A549 (cell line): ENCODE measurements at regions of chr11 and their contacts with region 1.

Region 1: GRCh38 chr11:29328961-29329441 is 687.8 kb downstream of the KCNA4 start:
- DNase-seq: peak; percentile 33 to 84
- ATAC-seq: peak; percentile 85 to 92
- H3K4me3 ChIP-seq: no peak overlapping the region
- H3K27ac ChIP-seq: peak overlapping the region; percentile 52 to 83
- H3K4me1 ChIP-seq: peaks cover 19% of the 10 kb centered on the region
- CTCF ChIP-seq: peak; percentile 86
- EP300 ChIP-seq: no peak; a peak in 1 of 5 replicates
- POLR2A ChIP-seq: no peak
- RAD21 ChIP-seq: peak; percentile 94 to 96

Region 2: DNA sequence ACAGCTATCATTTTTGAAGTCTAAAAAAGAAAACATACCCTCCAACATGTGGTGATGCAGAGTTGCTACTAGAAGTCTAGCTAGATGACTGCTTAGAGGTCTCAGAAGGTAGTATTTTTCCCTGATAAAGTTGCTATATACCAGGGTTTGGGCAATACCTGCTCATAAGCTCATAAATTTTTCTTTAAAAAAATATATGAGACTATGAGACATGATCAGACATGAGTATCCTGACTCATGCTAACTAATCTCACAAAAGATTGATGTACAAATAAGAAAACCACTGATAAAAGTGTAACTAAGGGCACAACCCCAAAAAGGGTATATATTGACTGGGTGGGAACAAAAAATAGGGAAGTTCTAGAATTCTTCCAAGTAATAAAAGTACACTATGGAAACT is 479.9 kb before region 1 on chr11:
- CTCF ChIA-PET with region 1: interaction called, 13 read pairs
- POLR2A ChIA-PET with region 1: no interaction called
- DNase-seq: no peak
- ATAC-seq: no peak
- H3K4me3 ChIP-seq: no peak overlapping the region
- H3K27ac ChIP-seq: peak overlapping the region; percentile 18 to 58; a peak in 3 of 6 replicates
- H3K4me1 ChIP-seq: no peaks in the 10 kb centered on the region
- CTCF ChIP-seq: no peak
- EP300 ChIP-seq: no peak; a peak in 1 of 5 replicates
- POLR2A ChIP-seq: no peak
- RAD21 ChIP-seq: no peak

Region 3: GRCh38 chr11:28874706-28875105 is 454.3 kb before region 1 on chr11:
- CTCF ChIA-PET with region 1: no interaction called
- POLR2A ChIA-PET with region 1: no interaction called
- DNase-seq: no peak
- ATAC-seq: no peak
- H3K4me3 ChIP-seq: no peak overlapping the region
- H3K27ac ChIP-seq: no peak overlapping the region
- H3K4me1 ChIP-seq: peaks cover 13% of the 10 kb centered on the region
- CTCF ChIP-seq: no peak
- EP300 ChIP-seq: no peak
- POLR2A ChIP-seq: no peak
- RAD21 ChIP-seq: no peak

Region 4: GRCh38 chr11:28976801-28977145 is 352.2 kb before region 1 on chr11:
- CTCF ChIA-PET with region 1: no interaction called
- POLR2A ChIA-PET with region 1: no interaction called
- DNase-seq: no peak
- ATAC-seq: no peak
- H3K4me3 ChIP-seq: no peak overlapping the region
- H3K27ac ChIP-seq: no peak overlapping the region
- H3K4me1 ChIP-seq: peaks cover 6% of the 10 kb centered on the region; the same call in 1 of the 3 replicates
- CTCF ChIP-seq: no peak
- EP300 ChIP-seq: no peak
- POLR2A ChIP-seq: no peak
- RAD21 ChIP-seq: no peak

Region 5: DNA sequence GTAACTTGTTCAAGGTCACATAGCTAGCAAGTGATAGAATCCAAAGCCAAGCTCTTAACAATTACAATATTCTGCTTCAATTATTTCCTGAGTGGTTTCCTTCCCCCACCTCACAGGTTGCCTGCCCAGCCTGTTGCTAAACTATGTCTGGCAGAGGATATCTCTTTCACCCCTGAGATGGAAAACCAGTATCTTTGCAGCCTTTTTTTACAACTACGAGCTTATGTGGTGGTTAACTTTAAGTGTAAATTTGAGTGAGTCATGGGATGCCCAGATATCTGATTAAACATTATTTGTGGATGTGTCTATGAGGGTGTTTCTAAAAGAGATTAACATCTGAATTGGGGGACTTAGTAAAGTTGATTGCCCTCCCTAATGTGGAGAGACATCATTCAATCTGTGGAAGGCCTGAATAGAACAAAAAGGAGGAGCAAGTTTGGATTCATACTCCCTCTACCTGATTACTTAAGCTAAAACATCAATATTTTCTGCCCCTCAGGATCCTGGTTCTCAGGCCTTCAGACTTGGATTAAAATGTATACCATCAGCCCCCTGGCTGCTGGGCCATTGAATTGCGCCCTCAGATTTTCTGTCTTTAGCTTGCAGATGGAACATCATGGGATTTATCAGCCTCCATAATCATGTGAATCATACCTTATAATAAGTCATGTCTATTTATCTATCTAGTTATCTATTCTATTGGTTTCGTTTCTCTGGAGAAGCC is 308.9 kb before region 1 on chr11:
- CTCF ChIA-PET with region 1: interaction called, 22 read pairs
- POLR2A ChIA-PET with region 1: no interaction called
- DNase-seq: peak; percentile 6 to 75
- ATAC-seq: peak; percentile 42 to 63; a peak in 4 of 6 replicates
- H3K4me3 ChIP-seq: no peak overlapping the region
- H3K27ac ChIP-seq: peak overlapping the region; percentile 74 to 77
- H3K4me1 ChIP-seq: peaks cover 24% of the 10 kb centered on the region
- CTCF ChIP-seq: peak; percentile 34; the same call in 2 of the 3 replicates
- EP300 ChIP-seq: no peak
- POLR2A ChIP-seq: no peak
- RAD21 ChIP-seq: peak in 1 of 2 experiments; percentile 48; a peak in 3 of 5 replicates

Region 6: DNA sequence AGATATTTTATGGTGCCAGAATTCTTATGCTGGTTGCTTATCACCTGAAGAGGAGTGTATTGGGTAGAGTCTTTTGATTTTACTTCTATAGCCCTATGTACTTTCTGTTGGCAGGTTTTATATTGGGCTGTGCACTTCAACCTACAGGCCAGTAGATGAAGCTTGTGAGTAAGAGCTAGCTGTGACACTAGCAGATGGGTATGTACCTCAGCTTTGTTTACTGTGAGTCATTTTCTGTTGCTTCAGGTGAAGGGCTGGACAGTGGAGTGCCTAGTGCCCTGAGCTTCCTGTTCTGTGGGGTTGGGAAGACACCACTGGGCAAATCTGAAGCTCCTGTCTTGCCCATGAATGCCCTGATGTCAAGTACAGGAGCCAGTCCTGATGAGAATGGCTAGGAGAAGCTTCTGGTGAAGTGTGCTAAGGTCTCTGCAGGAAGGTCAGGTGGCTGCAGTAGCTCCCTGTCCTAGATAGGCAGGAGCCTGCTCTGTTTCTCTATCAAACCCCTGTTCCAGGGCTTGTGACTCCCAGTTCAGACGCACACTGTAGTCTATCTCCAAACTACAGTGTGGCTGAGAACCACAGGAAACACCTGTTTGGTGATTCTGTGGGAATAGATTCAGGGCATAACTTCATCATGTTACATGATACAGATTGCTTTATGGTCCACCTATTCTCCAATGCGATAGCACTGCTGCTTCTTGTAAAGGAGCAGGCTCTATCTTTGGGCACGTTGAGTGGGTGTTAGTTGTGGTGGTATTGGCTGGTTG is 67.9 kb before region 1 on chr11:
- CTCF ChIA-PET with region 1: interaction called, 11 read pairs
- POLR2A ChIA-PET with region 1: interaction called, 5 read pairs
- DNase-seq: peak; percentile 15 to 86
- ATAC-seq: peak; percentile 100
- H3K4me3 ChIP-seq: no peak overlapping the region
- H3K27ac ChIP-seq: peak overlapping the region; percentile 57 to 81
- H3K4me1 ChIP-seq: peaks cover 16% of the 10 kb centered on the region
- CTCF ChIP-seq: peak; percentile 36; the same call in 2 of the 3 replicates
- EP300 ChIP-seq: no peak; a peak in 1 of 5 replicates
- POLR2A ChIP-seq: no peak
- RAD21 ChIP-seq: peak; percentile 59 to 61

Region 7: DNA sequence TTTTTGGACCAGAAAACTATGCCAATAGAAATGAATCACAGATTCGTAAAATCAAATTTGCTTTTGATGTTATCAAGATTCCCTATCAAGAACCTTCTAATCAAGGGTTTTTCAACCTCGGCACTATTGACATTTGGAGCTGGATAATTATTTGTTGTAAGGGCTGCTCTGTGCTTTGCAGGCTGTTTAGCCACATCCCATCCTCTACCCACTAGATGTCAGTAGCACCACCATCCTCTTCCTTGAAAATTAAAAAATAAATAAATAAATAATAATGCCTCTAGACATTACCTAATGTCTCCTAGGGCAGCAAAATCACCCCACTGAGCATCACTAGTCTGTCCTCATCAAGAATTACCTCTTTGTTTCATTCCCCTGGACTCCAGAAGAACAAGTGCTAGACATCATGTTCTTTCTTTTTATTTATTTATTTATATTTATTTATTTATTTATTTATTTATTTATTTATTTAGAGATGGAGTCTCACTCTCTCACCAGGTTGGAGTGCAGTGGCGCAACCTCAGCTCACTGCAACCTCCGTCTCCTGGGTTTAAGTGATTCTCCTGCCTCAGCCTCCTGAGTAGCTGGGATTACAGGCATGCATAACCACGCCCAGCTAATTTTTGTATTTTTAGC is 56.9 kb before region 1 on chr11:
- CTCF ChIA-PET with region 1: interaction called, 12 read pairs
- POLR2A ChIA-PET with region 1: no interaction called
- DNase-seq: peak; percentile 23 to 55
- ATAC-seq: peak in 1 of 2 experiments; percentile 70; a peak in 3 of 6 replicates
- H3K4me3 ChIP-seq: no peak overlapping the region
- H3K27ac ChIP-seq: peak overlapping the region in 1 of 2 experiments; percentile 15; a peak in 2 of 6 replicates
- H3K4me1 ChIP-seq: peaks cover 7% of the 10 kb centered on the region; the same call in 1 of the 3 replicates
- CTCF ChIP-seq: peak; percentile 47
- EP300 ChIP-seq: no peak
- POLR2A ChIP-seq: no peak
- RAD21 ChIP-seq: peak; percentile 47 to 51

Region 8: DNA sequence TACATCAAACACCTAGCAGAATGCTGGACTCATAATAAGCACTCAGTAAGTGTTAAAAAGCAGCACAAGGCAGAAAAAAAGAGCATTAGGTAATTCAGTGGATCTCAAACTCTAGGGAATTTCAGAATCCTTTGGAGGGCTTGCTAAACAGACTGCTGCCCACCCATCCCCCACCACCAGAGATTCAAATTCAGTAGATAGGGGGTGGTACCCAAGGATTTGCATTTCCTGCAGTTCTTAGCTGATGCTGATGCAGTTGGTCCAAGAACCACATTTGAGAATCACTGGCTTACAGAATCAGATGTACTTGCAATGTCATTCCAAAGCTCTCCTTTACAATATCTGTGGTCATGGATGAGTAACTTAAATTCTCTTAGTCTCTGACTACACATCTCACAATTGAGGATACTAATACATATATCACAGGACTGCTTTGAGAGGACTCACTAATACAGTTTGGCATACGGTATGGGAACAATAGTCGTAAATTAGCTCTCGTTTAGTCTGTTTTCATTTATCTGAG is 23.3 kb after region 1 on chr11:
- CTCF ChIA-PET with region 1: no interaction called
- POLR2A ChIA-PET with region 1: no interaction called
- DNase-seq: no peak
- ATAC-seq: no peak
- H3K4me3 ChIP-seq: no peak overlapping the region
- H3K27ac ChIP-seq: no peak overlapping the region
- H3K4me1 ChIP-seq: peaks cover 11% of the 10 kb centered on the region
- CTCF ChIP-seq: no peak
- EP300 ChIP-seq: no peak
- POLR2A ChIP-seq: no peak
- RAD21 ChIP-seq: no peak

Region 9: DNA sequence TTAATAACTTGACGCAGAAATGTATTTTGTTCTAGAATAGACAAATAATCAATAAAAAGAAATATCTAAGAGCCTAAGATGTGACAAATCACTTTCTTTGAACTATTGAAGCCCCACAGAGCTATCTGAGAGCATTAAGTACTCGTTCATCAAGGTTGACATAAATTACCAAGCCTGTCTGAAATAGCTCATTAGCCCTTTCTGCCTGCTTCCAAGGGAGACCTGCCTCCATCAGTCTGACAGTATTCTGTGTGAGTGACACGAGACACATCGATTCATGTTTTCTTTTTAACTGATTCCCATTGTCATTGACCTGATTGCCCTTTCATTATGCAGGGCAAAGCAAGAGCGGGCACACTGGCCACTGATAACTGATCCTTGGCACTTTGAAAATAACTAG is 340.3 kb after region 1 on chr11:
- CTCF ChIA-PET with region 1: no interaction called
- POLR2A ChIA-PET with region 1: no interaction called
- DNase-seq: no peak
- ATAC-seq: no peak
- H3K4me3 ChIP-seq: no peak overlapping the region
- H3K27ac ChIP-seq: no peak overlapping the region
- H3K4me1 ChIP-seq: no peaks in the 10 kb centered on the region
- CTCF ChIP-seq: no peak
- EP300 ChIP-seq: no peak
- POLR2A ChIP-seq: no peak
- RAD21 ChIP-seq: no peak